ENCODE measurements at regions of chr10 and their contacts with region 1.

Region 1: GRCh38 chr10:104209575-104210198 is 22.5 kb downstream of the CFAP43 start:
- DNase-seq: no peak
- ATAC-seq: no peak

Region 2: GRCh38 chr10:104045151-104046089 is 164.3 kb before region 1 on chr10:
- intact Hi-C with region 1: loop called (anchors 1 kb)
- DNase-seq: no peak
- ATAC-seq: peak; percentile 66